Prostate gland (tissue), 2 donors: ENCODE measurements at regions of chr4 and their contacts with region 1.

Region 1: GRCh38 chr4:87150498-87151261 is 69.7 kb downstream of the KLHL8 start:
- DNase-seq: peak; percentile 72
- H3K4me3 ChIP-seq: no peak overlapping the region
- H3K27ac ChIP-seq: no peak overlapping the region
- H3K4me1 ChIP-seq: no peaks in the 10 kb centered on the region
- H3K27me3 ChIP-seq: no peaks in the 10 kb centered on the region
- CTCF ChIP-seq: peak; percentile 84 to 92 (median 88)
- POLR2A ChIP-seq: no peak

Region 2: DNA sequence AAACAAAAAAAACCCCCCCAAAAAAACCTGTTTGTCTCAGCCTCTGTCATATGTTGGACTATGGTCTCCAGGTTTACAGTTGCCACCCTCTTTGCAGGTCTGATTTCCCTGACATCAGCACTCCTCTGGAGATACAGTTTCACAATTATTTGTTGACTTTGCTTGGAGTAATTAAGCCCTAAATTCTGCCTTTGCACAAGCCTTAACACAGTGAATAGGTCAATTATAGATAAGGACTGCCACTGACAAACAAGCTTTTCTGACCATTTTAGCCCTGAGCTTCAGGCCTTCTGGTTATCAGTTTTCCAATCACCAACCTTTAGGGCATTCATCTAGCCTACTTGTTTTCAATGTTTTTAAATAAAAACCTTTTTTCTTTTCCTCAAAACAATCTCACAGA is 770.4 kb before region 1 on chr4:
- intact Hi-C with region 1: no loop called
- DNase-seq: no peak
- H3K4me3 ChIP-seq: no peak overlapping the region
- H3K27ac ChIP-seq: no peak overlapping the region
- H3K4me1 ChIP-seq: peaks cover 5% of the 10 kb centered on the region
- H3K27me3 ChIP-seq: no peaks in the 10 kb centered on the region
- CTCF ChIP-seq: no peak
- POLR2A ChIP-seq: no peak

Region 3: GRCh38 chr4:86876894-86877685 is 273.6 kb before region 1 on chr4:
- intact Hi-C with region 1: no loop called
- DNase-seq: no peak
- H3K4me3 ChIP-seq: no peak overlapping the region
- H3K27ac ChIP-seq: no peak overlapping the region
- H3K4me1 ChIP-seq: no peaks in the 10 kb centered on the region
- H3K27me3 ChIP-seq: no peaks in the 10 kb centered on the region
- CTCF ChIP-seq: no peak
- POLR2A ChIP-seq: no peak

Region 4: DNA sequence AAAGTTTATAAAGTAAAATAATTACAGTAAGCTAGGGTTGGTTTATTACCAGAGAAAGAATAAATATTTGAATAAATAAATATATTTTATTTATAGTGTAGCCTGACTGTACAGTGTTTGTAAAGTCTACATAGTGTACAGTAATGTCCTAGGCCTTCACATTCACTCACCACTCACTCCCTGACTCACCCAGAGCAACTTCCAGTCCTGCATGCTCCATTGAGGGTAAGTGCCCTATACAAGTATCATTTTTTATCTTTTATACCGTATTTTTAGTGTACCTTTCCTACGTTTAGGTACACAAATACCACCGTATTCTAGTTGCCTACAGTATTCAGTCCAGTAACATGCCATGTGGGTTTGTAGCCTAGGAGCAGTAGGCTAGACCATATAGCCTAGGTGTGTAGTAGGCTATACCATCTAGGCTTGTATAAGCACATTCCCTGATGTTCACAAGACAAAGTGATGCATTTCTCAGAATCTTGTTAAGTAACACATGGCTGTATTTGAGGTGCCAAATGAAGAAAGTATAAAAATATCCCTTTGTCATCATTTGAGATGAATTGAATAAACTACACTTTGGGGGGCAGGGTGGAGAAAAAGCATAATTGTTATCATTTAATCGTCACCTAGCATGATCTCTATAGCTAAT is 84.5 kb after region 1 on chr4:
- intact Hi-C with region 1: loop called (anchors 1 kb)
- DNase-seq: no peak
- H3K4me3 ChIP-seq: peak overlapping the region; percentile 18 to 23
- H3K27ac ChIP-seq: no peak overlapping the region
- H3K4me1 ChIP-seq: no peaks in the 10 kb centered on the region
- H3K27me3 ChIP-seq: no peaks in the 10 kb centered on the region
- CTCF ChIP-seq: no peak
- POLR2A ChIP-seq: no peak

Region 5: GRCh38 chr4:87339440-87339839 is 188.8 kb after region 1 on chr4:
- intact Hi-C with region 1: no loop called
- DNase-seq: no peak
- H3K4me3 ChIP-seq: no peak overlapping the region
- H3K27ac ChIP-seq: no peak overlapping the region
- H3K4me1 ChIP-seq: no peaks in the 10 kb centered on the region
- H3K27me3 ChIP-seq: no peaks in the 10 kb centered on the region
- CTCF ChIP-seq: no peak
- POLR2A ChIP-seq: no peak